CD4-positive, alpha-beta T cell (primary cell): ENCODE measurements at regions of chr16 and their contacts with region 1.

Region 1: DNA sequence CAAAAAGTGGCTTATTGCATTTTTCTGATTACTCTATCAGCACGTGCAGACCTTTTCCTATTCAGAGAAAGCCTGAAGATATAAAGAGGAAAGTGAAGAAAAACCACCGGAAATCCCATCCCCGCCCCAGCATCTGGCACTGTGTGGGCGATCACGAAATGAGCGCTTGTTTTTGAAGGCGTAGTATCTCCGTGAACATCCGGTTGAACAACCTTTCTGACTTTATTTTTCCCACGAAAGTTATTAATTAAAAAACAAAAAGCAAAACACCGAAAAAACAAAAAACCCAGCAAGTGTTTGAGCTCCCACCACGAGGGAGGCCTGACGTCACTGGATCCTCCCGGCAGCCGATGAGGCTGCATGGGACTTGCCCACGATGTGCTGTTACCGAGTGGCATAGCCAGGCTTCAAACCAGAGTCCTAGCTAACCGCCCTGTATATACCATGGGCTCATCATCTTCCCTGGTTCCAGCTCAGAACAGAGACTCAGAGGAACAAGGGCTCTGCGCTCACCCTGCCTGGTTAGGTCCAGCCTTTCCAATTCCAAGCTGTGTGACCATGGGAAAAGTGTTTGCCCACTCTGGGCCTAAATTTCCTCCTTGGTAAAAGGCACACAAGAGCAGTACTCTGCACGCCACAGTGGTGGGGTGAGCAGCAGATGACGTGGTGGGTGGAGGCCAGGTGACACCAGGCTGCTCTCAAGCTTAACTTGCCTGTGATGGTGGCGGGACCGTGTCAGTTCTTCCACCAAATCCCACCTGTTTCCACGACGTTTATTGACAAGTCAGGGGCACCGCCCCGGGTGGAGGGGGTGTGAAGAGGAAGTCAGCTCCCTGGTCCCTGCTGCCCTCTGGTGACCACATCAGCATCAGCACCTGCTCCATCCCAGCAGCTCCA is 34.3 kb upstream of the IL21R start:
- DNase-seq: peak; percentile 70 to 98 (median 86)
- ATAC-seq: peak; percentile 79
- H3K4me3 ChIP-seq: peak overlapping the region; percentile 23
- H3K4me3 Mint-ChIP-seq: peak overlapping the region; percentile 35
- H3K27ac ChIP-seq: peak overlapping the region; percentile 86 to 98
- H3K27ac Mint-ChIP-seq: peak overlapping the region; percentile 99
- H3K4me1 ChIP-seq: peaks cover 71% of the 10 kb centered on the region
- H3K4me1 Mint-ChIP-seq: peaks cover 72% of the 10 kb centered on the region
- H3K27me3 ChIP-seq: no peaks in the 10 kb centered on the region
- H3K27me3 Mint-ChIP-seq: no peaks in the 10 kb centered on the region
- CTCF ChIP-seq: peak; percentile 87

Region 2: GRCh38 chr16:27169511-27170071 is 198.1 kb before region 1 on chr16:
- CTCF ChIA-PET with region 1: interaction called, 15 read pairs
- POLR2A ChIA-PET with region 1: interaction called, 16 read pairs
- intact Hi-C with region 1: no loop called
- DNase-seq: peak; percentile 55 to 94 (median 75)
- ATAC-seq: peak; percentile 84
- H3K4me3 ChIP-seq: peak overlapping the region; percentile 5
- H3K4me3 Mint-ChIP-seq: peak overlapping the region; percentile 2
- H3K27ac ChIP-seq: peak overlapping the region in 1 of 2 donors; percentile 21
- H3K27ac Mint-ChIP-seq: peak overlapping the region; percentile 71
- H3K4me1 ChIP-seq: peaks cover 66% of the 10 kb centered on the region
- H3K4me1 Mint-ChIP-seq: peaks cover 75% of the 10 kb centered on the region
- H3K27me3 ChIP-seq: no peaks in the 10 kb centered on the region
- H3K27me3 Mint-ChIP-seq: no peaks in the 10 kb centered on the region
- CTCF ChIP-seq: no peak

Region 3: GRCh38 chr16:27203429-27204231 is 164.1 kb before region 1 on chr16 and contains the start of gene KDM8:
- CTCF ChIA-PET with region 1: interaction called, 7 read pairs
- POLR2A ChIA-PET with region 1: interaction called, 24 read pairs
- intact Hi-C with region 1: loop called in 1 of 2 experiments (anchors 2 kb)
- DNase-seq: peak; percentile 98 to 100 (median 100)
- ATAC-seq: peak; percentile 86
- H3K4me3 ChIP-seq: peak within 1 kb of the TSS; percentile 95
- H3K4me3 Mint-ChIP-seq: peak within 1 kb of the TSS; percentile 97
- H3K27ac ChIP-seq: peak within 1 kb of the TSS; percentile 93 to 97
- H3K27ac Mint-ChIP-seq: peak within 1 kb of the TSS; percentile 96
- H3K4me1 ChIP-seq: peaks cover 49% of the 10 kb centered on the region
- H3K4me1 Mint-ChIP-seq: peaks cover 60% of the 10 kb centered on the region
- H3K27me3 ChIP-seq: no peaks in the 10 kb centered on the region
- H3K27me3 Mint-ChIP-seq: no peaks in the 10 kb centered on the region
- CTCF ChIP-seq: no peak
- total RNA-seq, gene KDM8: 15.1 to 17.3 TPM

Region 4: GRCh38 chr16:27355610-27356009 is 12.1 kb before region 1 on chr16:
- CTCF ChIA-PET with region 1: interaction called, 4 read pairs
- POLR2A ChIA-PET with region 1: interaction called, 12 read pairs
- intact Hi-C with region 1: no loop called
- DNase-seq: peak in 12 of 14 experiments; percentile 23 to 75 (median 46)
- ATAC-seq: peak; percentile 76
- H3K4me3 ChIP-seq: no peak overlapping the region
- H3K4me3 Mint-ChIP-seq: no peak overlapping the region
- H3K27ac ChIP-seq: no peak overlapping the region
- H3K27ac Mint-ChIP-seq: peak overlapping the region; percentile 84
- H3K4me1 ChIP-seq: no peaks in the 10 kb centered on the region
- H3K4me1 Mint-ChIP-seq: peaks cover 17% of the 10 kb centered on the region
- H3K27me3 ChIP-seq: no peaks in the 10 kb centered on the region
- H3K27me3 Mint-ChIP-seq: no peaks in the 10 kb centered on the region
- CTCF ChIP-seq: peak; percentile 23

Region 5: GRCh38 chr16:27408012-27408601 is 40.4 kb after region 1 on chr16:
- CTCF ChIA-PET with region 1: interaction called, 11 read pairs
- POLR2A ChIA-PET with region 1: interaction called, 134 read pairs
- intact Hi-C with region 1: loop called in 1 of 2 experiments (anchors 5 kb)
- DNase-seq: peak in 6 of 14 experiments; percentile 20 to 57 (median 50)
- ATAC-seq: peak; percentile 24
- H3K4me3 ChIP-seq: peak overlapping the region; percentile 2
- H3K4me3 Mint-ChIP-seq: peak overlapping the region; percentile 72
- H3K27ac ChIP-seq: peak overlapping the region; percentile 9 to 39
- H3K27ac Mint-ChIP-seq: peak overlapping the region; percentile 90
- H3K4me1 ChIP-seq: peaks cover 56% of the 10 kb centered on the region
- H3K4me1 Mint-ChIP-seq: peaks cover 96% of the 10 kb centered on the region
- H3K27me3 ChIP-seq: no peaks in the 10 kb centered on the region
- H3K27me3 Mint-ChIP-seq: no peaks in the 10 kb centered on the region
- CTCF ChIP-seq: no peak

Region 6: GRCh38 chr16:27455700-27456099 is 88.0 kb after region 1 on chr16:
- CTCF ChIA-PET with region 1: interaction called, 12 read pairs
- POLR2A ChIA-PET with region 1: interaction called, 6 read pairs
- intact Hi-C with region 1: loop called in 1 of 2 experiments (anchors 2 kb)
- DNase-seq: peak in 3 of 14 experiments; percentile 21 to 38 (median 38)
- ATAC-seq: peak; percentile 43
- H3K4me3 ChIP-seq: no peak overlapping the region
- H3K4me3 Mint-ChIP-seq: peak overlapping the region; percentile 38
- H3K27ac ChIP-seq: no peak overlapping the region
- H3K27ac Mint-ChIP-seq: peak overlapping the region; percentile 50
- H3K4me1 ChIP-seq: peaks cover 52% of the 10 kb centered on the region
- H3K4me1 Mint-ChIP-seq: peaks cover 63% of the 10 kb centered on the region
- H3K27me3 ChIP-seq: no peaks in the 10 kb centered on the region
- H3K27me3 Mint-ChIP-seq: no peaks in the 10 kb centered on the region
- CTCF ChIP-seq: no peak